PC-3 (cell line): ENCODE measurements at regions of chr9 and their contacts with region 1.

Region 1: DNA sequence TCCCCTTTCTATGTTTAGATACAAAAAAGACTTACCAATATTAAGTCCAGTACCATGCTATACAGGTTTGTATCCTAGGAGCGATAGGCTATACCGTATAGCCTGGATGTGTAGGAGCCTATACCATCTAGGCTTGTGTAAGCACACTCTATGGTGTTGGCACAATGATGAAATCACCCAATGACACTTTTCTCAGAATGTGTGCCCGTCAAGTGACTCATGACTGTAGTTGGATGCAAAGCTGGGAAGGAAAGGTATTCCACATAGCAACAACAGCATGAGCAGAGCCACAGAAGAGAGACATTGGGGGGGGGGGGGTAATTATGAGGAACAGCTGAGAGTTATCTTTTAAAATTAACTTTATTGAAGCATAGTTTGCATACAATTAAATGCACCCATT is 63.2 kb downstream of the TTLL11 start:
- DNase-seq: peak; percentile 46
- ATAC-seq: peak; percentile 55
- H3K4me3 ChIP-seq: no peak overlapping the region
- H3K27ac ChIP-seq: no peak overlapping the region
- H3K4me1 ChIP-seq: no peaks in the 10 kb centered on the region
- H3K27me3 ChIP-seq: no peaks in the 10 kb centered on the region
- CTCF ChIP-seq: no peak

Region 2: GRCh38 chr9:121634329-121635261 is 395.3 kb before region 1 on chr9:
- CTCF ChIA-PET with region 1: no interaction called
- POLR2A ChIA-PET with region 1: no interaction called
- intact Hi-C with region 1: no loop called
- DNase-seq: peak; percentile 9
- ATAC-seq: peak; percentile 62
- H3K4me3 ChIP-seq: no peak overlapping the region
- H3K27ac ChIP-seq: no peak overlapping the region
- H3K4me1 ChIP-seq: peaks cover 11% of the 10 kb centered on the region; the same call in 1 of the 2 replicates
- H3K27me3 ChIP-seq: no peaks in the 10 kb centered on the region
- CTCF ChIP-seq: peak; percentile 45; the same call in 1 of the 2 replicates

Region 3: GRCh38 chr9:121783521-121784507 is 246.1 kb before region 1 on chr9:
- CTCF ChIA-PET with region 1: interaction called, 14 read pairs
- POLR2A ChIA-PET with region 1: no interaction called
- intact Hi-C with region 1: no loop called
- DNase-seq: no peak
- ATAC-seq: no peak
- H3K4me3 ChIP-seq: no peak overlapping the region
- H3K27ac ChIP-seq: no peak overlapping the region
- H3K4me1 ChIP-seq: no peaks in the 10 kb centered on the region
- H3K27me3 ChIP-seq: no peaks in the 10 kb centered on the region
- CTCF ChIP-seq: no peak

Region 4: GRCh38 chr9:121954477-121955140 is 75.3 kb before region 1 on chr9:
- CTCF ChIA-PET with region 1: no interaction called
- POLR2A ChIA-PET with region 1: no interaction called
- intact Hi-C with region 1: no loop called
- DNase-seq: no peak
- ATAC-seq: no peak
- H3K4me3 ChIP-seq: no peak overlapping the region
- H3K27ac ChIP-seq: no peak overlapping the region
- H3K4me1 ChIP-seq: peaks cover 39% of the 10 kb centered on the region
- H3K27me3 ChIP-seq: no peaks in the 10 kb centered on the region
- CTCF ChIP-seq: no peak